ENCODE measurements at regions of chr5 and their contacts with region 1.

Region 1: DNA sequence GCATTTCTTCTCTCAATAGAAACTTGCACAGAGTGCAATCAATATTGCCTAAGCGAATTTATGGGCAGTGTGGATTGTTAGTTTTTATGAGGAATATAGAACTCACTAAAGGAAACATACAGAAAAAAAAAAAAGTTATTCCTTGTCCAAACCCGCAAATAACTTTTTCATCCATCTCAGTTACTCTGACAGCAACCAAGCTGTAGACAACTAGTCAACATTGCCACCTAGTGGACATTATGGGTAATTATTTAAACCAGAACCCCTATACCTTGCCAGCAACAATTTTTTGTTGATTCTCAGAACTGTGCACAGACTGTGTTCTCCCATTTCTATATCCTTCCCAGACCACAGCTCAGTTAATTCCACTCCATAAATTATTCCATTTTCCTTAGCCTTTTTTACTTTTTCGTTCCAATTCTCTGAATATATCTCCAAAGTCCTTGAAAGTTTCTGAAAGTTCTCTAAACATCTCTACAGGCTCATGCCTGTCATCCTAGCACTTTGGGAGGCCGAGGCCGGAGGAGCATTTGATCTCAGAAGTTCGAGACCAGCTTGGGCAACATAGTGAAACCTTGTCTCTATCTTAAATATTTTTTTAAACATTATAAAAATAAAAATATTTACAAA is 2.6 kb upstream of the AFAP1L1 start:
- DNase-seq: peak in 2 of 35 experiments; percentile 6 to 66
- ATAC-seq: peak in 2 of 4 experiments; percentile 37 to 43
- H3K4me3 ChIP-seq: no peak overlapping the region
- H3K4me3 Mint-ChIP-seq: no peak overlapping the region
- H3K27ac ChIP-seq: no peak overlapping the region
- H3K27ac Mint-ChIP-seq: peak overlapping the region in 1 of 2 donors; percentile 7
- H3K4me1 ChIP-seq: peaks cover 5 to 12% of the 10 kb centered on the region in 2 experiments
- H3K4me1 Mint-ChIP-seq: peaks cover 15 to 26% (median 17%) of the 10 kb centered on the region in 3 donors
- H3K27me3 ChIP-seq: peaks cover 2 to 48% of the 10 kb centered on the region in 2 experiments
- H3K27me3 Mint-ChIP-seq: peaks cover 24 to 33% of the 10 kb centered on the region in 2 donors

Region 2: GRCh38 chr5:149141224-149141956 is 127.7 kb before region 1 on chr5 and contains the start of gene ABLIM3:
- CTCF ChIA-PET with region 1: interaction called, 8 to 34 read pairs
- POLR2A ChIA-PET with region 1: no interaction called
- DNase-seq: peak; percentile 19 to 79 (median 62)
- ATAC-seq: peak; percentile 86 to 97 (median 94)
- H3K4me3 ChIP-seq: peak within 1 kb of the TSS; percentile 49 to 71
- H3K4me3 Mint-ChIP-seq: peak within 1 kb of the TSS; percentile 44 to 70 (median 45)
- H3K27ac ChIP-seq: no peak within 1 kb of the TSS
- H3K27ac Mint-ChIP-seq: no peak within 1 kb of the TSS
- H3K4me1 ChIP-seq: peaks cover 0 to 11% of the 10 kb centered on the region in 2 experiments
- H3K4me1 Mint-ChIP-seq: peaks cover 0 to 2% (median 2%) of the 10 kb centered on the region in 3 donors
- H3K27me3 ChIP-seq: peaks cover 0 to 28% of the 10 kb centered on the region in 2 experiments
- H3K27me3 Mint-ChIP-seq: peaks cover 16 to 30% of the 10 kb centered on the region in 2 donors
- total RNA-seq, gene ABLIM3: 0.07 to 0.30 (median 0.29) TPM in 3 of 5 donors, not detected in the others

Region 3: GRCh38 chr5:149546924-149547323 is 277.9 kb after region 1 on chr5:
- CTCF ChIA-PET with region 1: no interaction called
- POLR2A ChIA-PET with region 1: no interaction called
- DNase-seq: no peak
- ATAC-seq: no peak
- H3K4me3 ChIP-seq: no peak overlapping the region
- H3K4me3 Mint-ChIP-seq: peak overlapping the region; percentile 28 to 95 (median 45)
- H3K27ac ChIP-seq: no peak overlapping the region
- H3K27ac Mint-ChIP-seq: peak overlapping the region; percentile 8 to 37
- H3K4me1 ChIP-seq: peaks cover 22 to 40% of the 10 kb centered on the region in 2 experiments
- H3K4me1 Mint-ChIP-seq: peaks cover 66 to 74% (median 70%) of the 10 kb centered on the region in 3 donors
- H3K27me3 ChIP-seq: no peaks in the 10 kb centered on the region
- H3K27me3 Mint-ChIP-seq: no peaks in the 10 kb centered on the region

Measured in T-cell (primary cell).